Right lobe of liver (tissue), 6 donors: ENCODE measurements at regions of chr2 and their contacts with region 1.

Region 1: GRCh38 chr2:10434886-10435819 is 13.0 kb downstream of the ODC1 start:
- DNase-seq: peak; percentile 75 to 82 (median 77)
- ATAC-seq: peak; percentile 79 to 86 (median 84)
- H3K4me3 ChIP-seq: no peak overlapping the region
- H3K27ac ChIP-seq: no peak overlapping the region
- H3K4me1 ChIP-seq: peaks cover 0 to 6% (median 0%) of the 10 kb centered on the region in 4 donors
- H3K27me3 ChIP-seq: no peaks in the 10 kb centered on the region
- CTCF ChIP-seq: peak; percentile 96 to 98 (median 96)
- POLR2A ChIP-seq: no peak

Region 2: GRCh38 chr2:9813312-9814133 is 621.6 kb before region 1 on chr2:
- intact Hi-C with region 1: no loop called
- DNase-seq: peak; percentile 66 to 72 (median 72)
- ATAC-seq: peak; percentile 84 to 94 (median 90)
- H3K4me3 ChIP-seq: no peak overlapping the region
- H3K27ac ChIP-seq: no peak overlapping the region
- H3K4me1 ChIP-seq: peaks cover 0 to 5% (median 0%) of the 10 kb centered on the region in 4 donors
- H3K27me3 ChIP-seq: no peaks in the 10 kb centered on the region
- CTCF ChIP-seq: peak; percentile 86 to 96 (median 90)
- POLR2A ChIP-seq: no peak

Region 3: DNA sequence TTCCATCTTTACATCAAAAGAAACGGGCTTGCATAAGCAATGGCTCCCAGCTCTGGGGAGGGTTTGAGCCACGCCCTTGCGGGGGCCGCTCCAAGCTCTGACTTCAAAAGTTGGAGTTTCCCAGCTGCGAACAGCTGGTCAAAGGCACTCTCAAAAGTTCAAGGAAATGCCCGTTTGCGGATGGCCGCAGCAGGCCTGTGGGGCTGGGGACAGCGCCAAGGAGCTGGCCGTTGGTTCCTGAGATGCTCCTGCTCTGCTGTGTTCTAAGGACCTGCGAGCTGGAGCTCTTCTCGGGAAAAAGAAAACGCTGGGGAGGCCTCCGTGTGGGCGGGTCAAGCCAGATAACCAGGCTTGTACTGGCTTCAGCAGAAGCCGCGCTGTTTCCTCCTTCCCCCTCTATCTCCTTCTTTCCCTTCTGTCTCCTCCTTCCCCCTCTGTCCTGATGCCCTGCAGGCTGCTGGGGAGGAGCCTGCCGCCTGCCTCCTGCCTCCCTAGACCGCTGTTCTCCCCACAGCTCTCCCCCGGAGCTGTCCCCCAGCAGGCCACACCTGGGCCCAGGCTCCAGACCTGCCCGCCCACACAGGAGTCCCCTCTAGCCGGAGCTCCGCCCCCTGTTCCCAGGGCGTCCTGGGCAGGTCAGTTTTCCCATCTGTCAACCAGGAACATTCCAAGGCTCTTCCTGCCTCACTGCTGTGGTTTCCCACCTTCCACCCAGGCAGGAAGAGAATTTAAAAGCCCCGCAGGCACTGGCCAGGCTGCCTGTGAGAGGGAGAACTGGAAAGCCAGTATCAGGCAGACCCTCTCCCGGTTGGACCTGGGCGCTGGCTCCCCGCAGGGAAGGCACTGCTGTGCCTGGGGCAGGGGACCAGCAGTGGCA is 377.7 kb before region 1 on chr2:
- intact Hi-C with region 1: loop called in 1 of 2 experiments (anchors 5 kb)
- DNase-seq: peak in 2 of 3 donors; percentile 23 to 50
- ATAC-seq: peak; percentile 28 to 45 (median 35)
- H3K4me3 ChIP-seq: no peak overlapping the region
- H3K27ac ChIP-seq: no peak overlapping the region
- H3K4me1 ChIP-seq: no peaks in the 10 kb centered on the region
- H3K27me3 ChIP-seq: no peaks in the 10 kb centered on the region
- CTCF ChIP-seq: no peak
- POLR2A ChIP-seq: no peak

Region 4: DNA sequence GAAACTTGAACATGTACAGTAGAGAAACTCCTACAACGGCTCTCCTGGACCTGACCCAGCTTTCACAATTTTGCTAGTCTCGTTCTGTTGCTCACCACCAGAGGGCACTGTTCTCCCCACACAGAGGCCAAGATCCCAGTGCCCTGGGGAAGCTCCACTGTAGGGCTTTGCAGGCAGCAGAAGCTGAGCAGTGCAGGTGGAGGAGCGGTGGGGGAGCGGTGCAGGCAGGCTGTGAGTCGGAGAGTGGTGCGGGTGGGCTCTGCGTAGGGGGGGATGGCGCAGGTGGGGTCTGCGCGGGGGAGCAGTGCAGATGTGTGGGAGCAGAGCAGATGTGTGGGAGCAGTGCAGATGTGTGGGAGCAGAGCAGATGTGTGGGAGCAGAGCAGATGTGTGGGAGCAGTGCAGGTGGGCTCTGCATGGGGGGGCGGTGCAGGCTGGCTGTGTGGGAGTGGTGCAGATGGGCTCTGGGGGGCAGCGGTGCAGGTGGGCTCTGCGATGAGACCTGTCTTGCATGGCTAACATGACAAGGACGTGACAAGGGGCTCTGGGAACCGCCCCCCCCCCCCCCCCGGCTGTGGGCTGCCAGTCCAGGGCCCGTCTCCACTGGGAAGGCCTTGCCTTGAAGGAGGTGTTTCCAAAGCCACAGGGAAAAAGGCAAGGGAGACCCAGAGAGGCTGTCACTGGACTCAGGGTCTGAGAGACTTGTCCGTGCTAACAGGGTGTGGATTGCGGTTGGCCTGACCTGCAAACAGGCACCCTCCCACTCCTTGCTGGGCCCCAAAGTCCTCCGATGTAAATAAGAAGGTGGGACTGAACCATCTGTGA is 362.3 kb before region 1 on chr2:
- intact Hi-C with region 1: loop called in 1 of 2 experiments (anchors 5 kb)
- DNase-seq: peak; percentile 74 to 84 (median 83)
- ATAC-seq: peak; percentile 95 to 99 (median 98)
- H3K4me3 ChIP-seq: no peak overlapping the region
- H3K27ac ChIP-seq: no peak overlapping the region
- H3K4me1 ChIP-seq: no peaks in the 10 kb centered on the region
- H3K27me3 ChIP-seq: no peaks in the 10 kb centered on the region
- CTCF ChIP-seq: peak; percentile 86 to 91 (median 88)
- POLR2A ChIP-seq: no peak

Region 5: GRCh38 chr2:10122386-10123280 is 312.5 kb before region 1 on chr2 and contains the start of gene RRM2:
- intact Hi-C with region 1: loop called (anchors 5 to 10 kb)
- DNase-seq: peak; percentile 94 to 97 (median 94)
- ATAC-seq: peak; percentile 67 to 83 (median 74)
- H3K4me3 ChIP-seq: peak within 1 kb of the TSS; percentile 38 to 50 (median 40)
- H3K27ac ChIP-seq: no peak within 1 kb of the TSS
- H3K4me1 ChIP-seq: peaks cover 4 to 45% (median 21%) of the 10 kb centered on the region in 4 donors
- H3K27me3 ChIP-seq: no peaks in the 10 kb centered on the region
- CTCF ChIP-seq: no peak
- POLR2A ChIP-seq: no peak
- total RNA-seq, gene RRM2: 1.1 to 10.3 (median 5.7) TPM

Region 6: GRCh38 chr2:10493636-10494281 is 58.6 kb after region 1 on chr2:
- intact Hi-C with region 1: no loop called
- DNase-seq: peak in 2 of 3 donors; percentile 49 to 53
- ATAC-seq: peak; percentile 36 to 70 (median 51)
- H3K4me3 ChIP-seq: no peak overlapping the region
- H3K27ac ChIP-seq: no peak overlapping the region
- H3K4me1 ChIP-seq: peaks cover 0 to 10% (median 0%) of the 10 kb centered on the region in 4 donors
- H3K27me3 ChIP-seq: no peaks in the 10 kb centered on the region
- CTCF ChIP-seq: no peak
- POLR2A ChIP-seq: no peak

Region 7: DNA sequence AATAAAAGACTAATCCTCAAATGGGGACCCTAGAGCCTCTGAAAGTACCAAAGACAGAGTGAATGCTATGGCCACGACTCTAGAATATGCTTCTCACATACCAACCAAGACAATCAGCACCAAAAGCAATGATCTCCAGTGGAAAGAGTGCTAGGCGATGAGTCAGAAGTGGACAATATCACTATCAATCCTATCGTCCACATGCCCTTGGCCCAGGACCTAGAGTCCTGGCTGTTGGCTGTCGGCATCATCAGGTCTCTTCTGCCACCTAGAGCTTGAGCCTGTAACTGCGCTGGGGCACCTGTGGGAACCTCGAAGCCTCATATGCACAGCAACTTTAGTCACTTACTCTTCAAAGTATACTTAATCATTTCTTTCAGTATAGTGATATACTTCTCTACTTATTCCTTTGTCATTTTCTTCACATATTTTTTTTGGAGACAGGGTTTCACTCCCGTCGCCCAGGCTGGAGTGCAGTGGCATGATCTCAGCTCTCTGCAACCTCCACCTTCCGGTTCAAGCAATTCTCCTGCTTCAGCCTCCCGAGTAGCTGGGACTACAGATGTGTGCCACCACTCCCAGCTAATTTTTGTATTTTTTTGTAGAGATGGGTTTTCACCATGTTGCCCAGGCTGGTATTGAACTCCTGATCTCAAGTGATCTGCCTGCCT is 224.9 kb after region 1 on chr2:
- intact Hi-C with region 1: loop called (anchors 10 kb)
- DNase-seq: peak; percentile 62 to 76 (median 72)
- ATAC-seq: peak; percentile 99 to 100 (median 100)
- H3K4me3 ChIP-seq: no peak overlapping the region
- H3K27ac ChIP-seq: no peak overlapping the region
- H3K4me1 ChIP-seq: no peaks in the 10 kb centered on the region
- H3K27me3 ChIP-seq: no peaks in the 10 kb centered on the region
- CTCF ChIP-seq: peak; percentile 76 to 88 (median 80)
- POLR2A ChIP-seq: no peak